CD4-positive, alpha-beta memory T cell (primary cell): ENCODE measurements at regions of chr11 and their contacts with region 1.

Region 1: DNA sequence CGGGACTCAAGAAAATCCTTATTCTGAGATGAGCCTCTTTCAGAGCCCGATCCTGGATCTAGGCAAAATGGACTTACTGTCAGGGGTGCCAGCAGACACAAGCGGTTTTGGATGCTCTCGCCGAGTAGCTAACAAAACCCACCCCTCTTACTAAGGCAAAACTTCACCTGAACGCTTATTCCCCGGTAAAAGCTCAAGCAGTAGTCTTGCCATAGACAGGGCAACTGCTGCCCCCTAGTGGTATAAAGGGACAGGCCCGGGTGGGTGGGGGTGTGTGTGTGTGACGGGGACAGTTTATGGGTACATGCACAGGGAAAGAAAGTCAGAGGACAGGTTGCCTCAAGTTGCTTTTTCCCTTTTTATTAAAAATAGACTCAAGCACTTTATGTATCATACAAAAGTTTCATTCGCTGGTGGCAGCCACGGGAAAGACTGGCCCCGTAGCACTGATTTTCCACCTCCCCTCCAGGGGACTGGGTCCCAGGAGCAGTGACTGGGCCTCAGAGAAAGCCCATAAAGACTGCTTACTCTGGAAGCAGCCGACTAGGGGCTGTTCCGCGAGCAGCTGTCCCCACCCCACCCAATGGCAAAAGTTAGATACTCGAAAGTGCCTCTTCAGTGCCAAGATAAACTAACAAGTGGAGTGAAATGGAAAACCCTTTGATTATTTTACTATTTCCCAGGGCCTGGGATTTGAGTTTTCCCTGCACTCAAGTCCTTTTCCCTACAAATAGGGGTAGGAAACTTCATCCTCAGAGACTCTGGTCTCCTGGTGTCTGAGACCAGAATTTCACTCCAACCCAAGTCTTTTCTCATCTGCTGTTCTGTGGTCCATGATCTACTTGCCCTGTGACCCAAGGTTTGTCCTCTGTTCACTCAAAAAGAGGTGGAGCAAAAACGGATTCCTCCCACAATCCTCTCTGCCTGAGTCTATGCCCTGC is 4.7 kb downstream of the YPEL4 start:
- DNase-seq: peak; percentile 82 to 89 (median 86)
- H3K4me3 ChIP-seq: no peak overlapping the region
- H3K4me3 Mint-ChIP-seq: peak overlapping the region in 1 of 8 donors; percentile 67
- H3K27ac ChIP-seq: no peak overlapping the region
- H3K27ac Mint-ChIP-seq: peak overlapping the region in 2 of 7 donors; percentile 62 to 69
- H3K4me1 ChIP-seq: peaks cover 17% of the 10 kb centered on the region
- H3K4me1 Mint-ChIP-seq: peaks cover 18 to 38% (median 28%) of the 10 kb centered on the region in 4 donors
- H3K27me3 ChIP-seq: peaks cover 37% of the 10 kb centered on the region
- H3K27me3 Mint-ChIP-seq: peaks cover 31 to 50% of the 10 kb centered on the region in 2 donors

Region 2: DNA sequence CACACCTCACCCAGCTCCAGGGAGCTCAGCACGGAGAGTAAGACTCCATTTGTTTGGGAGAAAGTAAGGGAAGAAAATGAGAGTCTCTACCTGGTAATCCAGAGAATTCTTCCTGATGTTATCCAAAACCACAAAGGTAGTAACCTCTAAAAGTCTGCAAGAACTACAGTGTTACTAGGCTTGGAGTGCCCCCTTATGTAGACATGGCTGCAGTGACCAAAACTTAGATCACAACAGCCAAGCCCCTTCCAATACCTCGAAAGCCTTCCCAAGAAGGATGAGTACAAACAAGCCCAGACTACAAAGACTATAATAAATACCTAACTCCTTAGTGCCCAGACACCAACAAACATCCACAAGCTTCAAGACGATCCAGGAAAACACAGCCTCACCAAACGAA is 82.4 kb before region 1 on chr11:
- CTCF ChIA-PET with region 1: interaction called, 181 read pairs
- POLR2A ChIA-PET with region 1: interaction called, 20 read pairs
- intact Hi-C with region 1: no loop called
- DNase-seq: no peak
- H3K4me3 ChIP-seq: no peak overlapping the region
- H3K4me3 Mint-ChIP-seq: peak overlapping the region in 3 of 8 donors; percentile 4 to 62 (median 57)
- H3K27ac ChIP-seq: no peak overlapping the region
- H3K27ac Mint-ChIP-seq: peak overlapping the region; percentile 39 to 95 (median 71)
- H3K4me1 ChIP-seq: peaks cover 47% of the 10 kb centered on the region
- H3K4me1 Mint-ChIP-seq: peaks cover 33 to 65% (median 50%) of the 10 kb centered on the region in 4 donors
- H3K27me3 ChIP-seq: no peaks in the 10 kb centered on the region
- H3K27me3 Mint-ChIP-seq: no peaks in the 10 kb centered on the region

Region 3: GRCh38 chr11:57597916-57598830 is 46.8 kb before region 1 on chr11:
- CTCF ChIA-PET with region 1: no interaction called
- POLR2A ChIA-PET with region 1: no interaction called
- intact Hi-C with region 1: no loop called
- DNase-seq: no peak
- H3K4me3 ChIP-seq: no peak overlapping the region
- H3K4me3 Mint-ChIP-seq: no peak overlapping the region
- H3K27ac ChIP-seq: no peak overlapping the region
- H3K27ac Mint-ChIP-seq: no peak overlapping the region
- H3K4me1 ChIP-seq: no peaks in the 10 kb centered on the region
- H3K4me1 Mint-ChIP-seq: no peaks in the 10 kb centered on the region
- H3K27me3 ChIP-seq: peaks cover 11% of the 10 kb centered on the region
- H3K27me3 Mint-ChIP-seq: peaks cover 29 to 36% of the 10 kb centered on the region in 2 donors

Region 4: GRCh38 chr11:57624864-57625263 is 20.2 kb before region 1 on chr11:
- CTCF ChIA-PET with region 1: interaction called, 20 read pairs
- POLR2A ChIA-PET with region 1: no interaction called
- intact Hi-C with region 1: no loop called
- DNase-seq: no peak
- H3K4me3 ChIP-seq: no peak overlapping the region
- H3K4me3 Mint-ChIP-seq: no peak overlapping the region
- H3K27ac ChIP-seq: no peak overlapping the region
- H3K27ac Mint-ChIP-seq: no peak overlapping the region
- H3K4me1 ChIP-seq: no peaks in the 10 kb centered on the region
- H3K4me1 Mint-ChIP-seq: no peaks in the 10 kb centered on the region
- H3K27me3 ChIP-seq: no peaks in the 10 kb centered on the region
- H3K27me3 Mint-ChIP-seq: peaks cover 6 to 8% of the 10 kb centered on the region in 2 donors

Region 5: GRCh38 chr11:57657194-57658022 is 12.4 kb after region 1 on chr11 and contains the start of gene CLP1:
- CTCF ChIA-PET with region 1: interaction called, 15 read pairs
- POLR2A ChIA-PET with region 1: interaction called, 4 read pairs
- intact Hi-C with region 1: loop called (anchors 1 kb)
- DNase-seq: peak; percentile 98 to 99 (median 98)
- H3K4me3 ChIP-seq: peak within 1 kb of the TSS; percentile 91 to 96
- H3K4me3 Mint-ChIP-seq: peak within 1 kb of the TSS; percentile 94 to 100 (median 98)
- H3K27ac ChIP-seq: peak within 1 kb of the TSS; percentile 84
- H3K27ac Mint-ChIP-seq: peak within 1 kb of the TSS; percentile 86 to 100 (median 97)
- H3K4me1 ChIP-seq: peaks cover 16% of the 10 kb centered on the region
- H3K4me1 Mint-ChIP-seq: peaks cover 15 to 30% (median 27%) of the 10 kb centered on the region in 4 donors
- H3K27me3 ChIP-seq: no peaks in the 10 kb centered on the region
- H3K27me3 Mint-ChIP-seq: no peaks in the 10 kb centered on the region
- total RNA-seq, gene CLP1: 14.1 to 16.0 TPM

Region 6: DNA sequence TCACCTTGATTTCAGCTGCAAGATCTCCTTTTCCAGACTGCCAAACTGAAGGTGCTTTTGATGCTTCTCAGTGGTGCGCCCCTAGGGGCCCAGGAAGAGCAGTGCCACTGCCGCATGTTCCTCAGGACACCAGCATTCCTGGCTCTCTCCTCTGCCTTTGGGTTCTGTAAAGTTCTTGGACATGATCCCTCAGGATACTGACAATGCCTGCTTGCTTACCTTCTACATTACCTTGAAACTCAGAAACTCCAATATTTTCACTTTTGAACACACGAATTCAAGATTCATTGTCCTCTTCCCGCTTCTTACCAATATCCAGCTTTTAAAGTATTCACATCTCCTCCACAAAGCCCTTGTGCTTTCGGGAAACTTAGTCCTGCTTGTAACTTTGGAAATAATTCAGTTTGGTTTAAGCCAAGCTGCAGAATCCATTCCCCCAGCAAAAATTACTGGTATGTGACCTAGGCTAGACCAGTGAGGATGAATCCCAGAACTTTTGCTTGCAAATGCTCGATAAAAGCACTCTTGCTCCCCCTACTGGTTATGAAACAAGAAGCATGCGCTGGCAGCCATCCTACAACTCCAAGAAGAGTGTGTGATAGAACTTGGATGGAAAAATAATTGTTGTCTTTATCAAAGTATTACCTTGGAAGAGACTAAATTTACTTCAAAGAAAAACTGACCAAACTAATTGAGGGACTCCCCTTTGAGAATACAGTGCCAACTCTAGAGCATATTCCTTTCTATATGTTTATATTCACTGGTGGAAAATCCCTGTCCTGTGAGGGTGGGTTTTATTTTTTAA is 879.4 kb after region 1 on chr11:
- CTCF ChIA-PET with region 1: no interaction called
- POLR2A ChIA-PET with region 1: interaction called, 3 read pairs
- intact Hi-C with region 1: loop called (anchors 10 kb)
- DNase-seq: peak; percentile 57 to 66 (median 63)
- H3K4me3 ChIP-seq: peak overlapping the region in 1 of 2 donors; percentile 22
- H3K4me3 Mint-ChIP-seq: peak overlapping the region; percentile 68 to 85 (median 76)
- H3K27ac ChIP-seq: peak overlapping the region; percentile 55
- H3K27ac Mint-ChIP-seq: peak overlapping the region; percentile 77 to 97 (median 94)
- H3K4me1 ChIP-seq: peaks cover 35% of the 10 kb centered on the region
- H3K4me1 Mint-ChIP-seq: peaks cover 31 to 54% (median 40%) of the 10 kb centered on the region in 4 donors
- H3K27me3 ChIP-seq: no peaks in the 10 kb centered on the region
- H3K27me3 Mint-ChIP-seq: no peaks in the 10 kb centered on the region